Colonic mucosa (tissue), 4 donors: ENCODE measurements at regions of chr3 and their contacts with region 1.

Region 1: DNA sequence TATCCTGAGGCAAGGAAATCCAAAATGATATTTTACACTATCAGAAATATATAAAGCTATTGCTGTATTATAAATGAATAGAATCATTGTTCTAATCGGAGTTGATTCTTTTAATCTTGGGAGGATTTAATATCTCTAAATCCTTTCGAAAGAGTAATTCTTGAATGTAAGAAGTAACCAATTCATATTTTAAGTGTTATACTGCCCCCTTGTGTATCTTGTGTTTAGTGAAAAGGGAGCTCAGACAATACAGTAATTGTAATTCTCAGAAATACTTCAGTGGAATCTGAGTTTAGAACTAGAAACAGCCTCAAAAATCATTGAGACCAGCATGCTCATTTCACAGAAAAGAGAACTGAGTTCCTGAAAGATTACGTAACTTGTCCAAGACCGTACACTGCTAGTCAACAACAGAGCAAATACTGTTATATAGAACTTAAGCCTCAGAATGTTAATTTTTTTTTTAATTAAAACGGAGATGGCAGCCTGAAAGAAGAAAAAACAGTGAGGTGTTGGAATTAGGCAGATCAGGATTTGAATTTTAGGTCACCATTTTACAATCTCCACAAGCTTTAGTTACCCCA is 42.9 kb downstream of the PLCH1 start:
- DNase-seq: no peak
- H3K4me3 ChIP-seq: no peak overlapping the region
- H3K27ac ChIP-seq: no peak overlapping the region
- H3K4me1 ChIP-seq: no peaks in the 10 kb centered on the region
- H3K27me3 ChIP-seq: no peaks in the 10 kb centered on the region
- CTCF ChIP-seq: peak; percentile 53

Region 2: DNA sequence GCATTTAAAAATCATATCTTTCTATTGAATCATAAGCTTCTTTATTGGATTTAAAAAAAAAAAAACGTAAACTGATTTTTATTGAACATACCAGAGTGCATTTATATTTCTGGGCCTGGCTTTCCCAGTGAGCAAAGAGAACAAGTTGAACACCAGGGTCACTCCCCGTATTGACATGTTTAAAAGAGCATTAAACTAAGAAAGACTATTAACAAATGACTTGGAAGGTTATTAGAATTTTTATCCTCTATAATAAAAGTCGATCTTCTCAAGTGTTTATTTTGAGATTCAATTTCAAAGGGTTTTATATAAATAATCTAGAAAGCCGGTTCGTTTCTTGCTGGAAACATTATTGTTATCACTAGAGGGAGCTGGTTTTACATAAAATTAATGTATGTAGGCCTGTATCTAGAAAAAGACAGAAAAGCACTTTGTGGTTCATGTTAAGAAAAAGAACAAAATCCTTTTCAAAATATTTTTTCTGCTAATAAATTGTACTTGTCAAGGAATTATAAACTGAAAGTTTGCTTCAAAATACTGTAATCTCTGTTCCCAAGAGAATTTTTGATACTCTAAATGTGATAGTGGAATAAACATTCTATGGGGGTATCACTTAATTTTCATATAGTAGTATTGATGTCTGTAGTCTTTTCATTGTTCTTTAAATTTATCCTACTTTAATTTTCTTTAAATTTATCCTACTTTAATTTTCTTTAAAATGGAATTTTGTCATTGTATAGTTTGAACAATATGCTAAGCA is 943.7 kb before region 1 on chr3:
- intact Hi-C with region 1: loop called (anchors 5 kb)
- DNase-seq: no peak
- H3K4me3 ChIP-seq: no peak overlapping the region
- H3K27ac ChIP-seq: no peak overlapping the region
- H3K4me1 ChIP-seq: no peaks in the 10 kb centered on the region
- H3K27me3 ChIP-seq: no peaks in the 10 kb centered on the region
- CTCF ChIP-seq: no peak

Region 3: GRCh38 chr3:154862265-154862664 is 839.7 kb before region 1 on chr3:
- intact Hi-C with region 1: no loop called
- DNase-seq: no peak
- H3K4me3 ChIP-seq: no peak overlapping the region
- H3K27ac ChIP-seq: no peak overlapping the region
- H3K4me1 ChIP-seq: no peaks in the 10 kb centered on the region
- H3K27me3 ChIP-seq: no peaks in the 10 kb centered on the region
- CTCF ChIP-seq: no peak

Region 4: GRCh38 chr3:155352900-155353490 is 349.0 kb before region 1 on chr3:
- intact Hi-C with region 1: loop called (anchors 10 kb)
- DNase-seq: no peak
- H3K4me3 ChIP-seq: no peak overlapping the region
- H3K27ac ChIP-seq: no peak overlapping the region
- H3K4me1 ChIP-seq: no peaks in the 10 kb centered on the region
- H3K27me3 ChIP-seq: no peaks in the 10 kb centered on the region
- CTCF ChIP-seq: peak; percentile 31

Region 5: GRCh38 chr3:155382396-155383042 is 319.5 kb before region 1 on chr3:
- intact Hi-C with region 1: loop called (anchors 2 kb)
- DNase-seq: peak; percentile 75
- H3K4me3 ChIP-seq: no peak overlapping the region
- H3K27ac ChIP-seq: no peak overlapping the region
- H3K4me1 ChIP-seq: no peaks in the 10 kb centered on the region
- H3K27me3 ChIP-seq: no peaks in the 10 kb centered on the region
- CTCF ChIP-seq: peak; percentile 57